ENCODE measurements at regions of chr15 and their contacts with region 1.

Region 1: GRCh38 chr15:74322181-74323076 is 45.0 kb downstream of the CYP11A1 start:
- DNase-seq: peak in 1 of 2 experiments; percentile 88
- H3K4me3 ChIP-seq: no peak overlapping the region
- H3K27ac ChIP-seq: no peak overlapping the region
- H3K4me1 ChIP-seq: peaks cover 3 to 25% (median 19%) of the 10 kb centered on the region in 4 experiments
- H3K27me3 ChIP-seq: no peaks in the 10 kb centered on the region
- CTCF ChIP-seq: peak; percentile 96 to 99 (median 97)
- EP300 ChIP-seq: no peak
- POLR2A ChIP-seq: no peak
- RAD21 ChIP-seq: peak; percentile 99

Region 2: GRCh38 chr15:73972984-73973682 is 349.3 kb before region 1 on chr15:
- CTCF ChIA-PET with region 1: interaction called, 47 read pairs
- POLR2A ChIA-PET with region 1: no interaction called
- DNase-seq: peak; percentile 54 to 92
- H3K4me3 ChIP-seq: peak overlapping the region in 1 of 4 experiments; percentile 44; a peak in 1 of 8 replicates
- H3K27ac ChIP-seq: no peak overlapping the region
- H3K4me1 ChIP-seq: peaks cover 0 to 8% (median 2%) of the 10 kb centered on the region in 4 experiments; a peak in 4 of 7 replicates
- H3K27me3 ChIP-seq: peaks cover 0 to 4% (median 2%) of the 10 kb centered on the region in 4 experiments; a peak in 3 of 7 replicates
- CTCF ChIP-seq: peak; percentile 82 to 94 (median 91)
- EP300 ChIP-seq: no peak
- POLR2A ChIP-seq: no peak
- RAD21 ChIP-seq: peak; percentile 97 to 99

Region 3: GRCh38 chr15:74053941-74054529 is 268.4 kb before region 1 on chr15:
- CTCF ChIA-PET with region 1: interaction called, 96 read pairs
- POLR2A ChIA-PET with region 1: interaction called, 5 read pairs
- DNase-seq: peak; percentile 21 to 86
- H3K4me3 ChIP-seq: no peak overlapping the region
- H3K27ac ChIP-seq: no peak overlapping the region
- H3K4me1 ChIP-seq: peaks cover 0 to 6% (median 0%) of the 10 kb centered on the region in 4 experiments; a peak in 2 of 7 replicates
- H3K27me3 ChIP-seq: peaks cover 0 to 6% (median 4%) of the 10 kb centered on the region in 4 experiments; a peak in 3 of 7 replicates
- CTCF ChIP-seq: peak; percentile 64 to 85 (median 77)
- EP300 ChIP-seq: no peak
- POLR2A ChIP-seq: no peak
- RAD21 ChIP-seq: peak; percentile 79 to 80

Region 4: DNA sequence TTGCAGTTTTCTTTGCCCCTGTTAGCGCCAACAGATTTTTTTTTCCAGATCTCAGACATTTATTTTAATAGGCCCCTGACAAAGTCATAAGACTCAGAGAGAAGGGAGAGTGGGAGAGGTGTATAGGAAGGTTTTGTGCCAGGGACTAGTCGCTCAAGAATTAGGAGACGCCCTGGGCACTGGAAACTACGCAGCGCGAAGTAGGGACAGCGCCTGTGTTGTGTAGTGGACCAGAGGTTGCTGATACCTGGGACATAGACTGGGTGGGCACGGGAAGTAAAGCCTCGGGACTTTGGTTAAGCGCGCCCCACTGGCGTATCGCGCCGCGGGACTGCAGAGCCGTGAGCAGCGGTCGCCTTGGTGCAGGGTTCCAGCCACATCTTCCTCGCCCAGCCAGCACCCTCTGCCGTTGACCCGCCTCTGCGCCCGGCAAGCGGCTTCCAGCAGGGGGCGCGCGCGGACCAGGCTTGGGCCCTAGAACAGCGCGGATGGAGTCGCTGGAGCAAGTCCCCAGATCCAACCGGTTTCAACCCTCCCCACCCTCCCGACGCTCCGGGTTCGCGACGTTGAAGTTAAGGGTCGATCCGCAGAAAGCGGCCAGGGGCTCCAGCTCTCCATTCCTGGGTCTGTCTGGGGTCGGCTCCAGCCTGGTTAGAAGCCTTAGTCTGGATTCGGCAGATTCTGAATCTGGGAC is 195.0 kb before region 1 on chr15:
- CTCF ChIA-PET with region 1: interaction called, 62 read pairs
- POLR2A ChIA-PET with region 1: interaction called, 4 read pairs
- DNase-seq: peak; percentile 78 to 100
- H3K4me3 ChIP-seq: peak overlapping the region in 3 of 4 experiments; percentile 26 to 57 (median 36); a peak in 7 of 8 replicates
- H3K27ac ChIP-seq: no peak overlapping the region
- H3K4me1 ChIP-seq: peaks cover 2 to 55% (median 42%) of the 10 kb centered on the region in 4 experiments
- H3K27me3 ChIP-seq: peaks cover 49 to 64% (median 57%) of the 10 kb centered on the region in 4 experiments
- CTCF ChIP-seq: peak in 2 of 3 experiments; percentile 99; a peak in 3 of 4 replicates
- EP300 ChIP-seq: no peak
- POLR2A ChIP-seq: no peak
- RAD21 ChIP-seq: peak; percentile 96 to 99

Region 5: DNA sequence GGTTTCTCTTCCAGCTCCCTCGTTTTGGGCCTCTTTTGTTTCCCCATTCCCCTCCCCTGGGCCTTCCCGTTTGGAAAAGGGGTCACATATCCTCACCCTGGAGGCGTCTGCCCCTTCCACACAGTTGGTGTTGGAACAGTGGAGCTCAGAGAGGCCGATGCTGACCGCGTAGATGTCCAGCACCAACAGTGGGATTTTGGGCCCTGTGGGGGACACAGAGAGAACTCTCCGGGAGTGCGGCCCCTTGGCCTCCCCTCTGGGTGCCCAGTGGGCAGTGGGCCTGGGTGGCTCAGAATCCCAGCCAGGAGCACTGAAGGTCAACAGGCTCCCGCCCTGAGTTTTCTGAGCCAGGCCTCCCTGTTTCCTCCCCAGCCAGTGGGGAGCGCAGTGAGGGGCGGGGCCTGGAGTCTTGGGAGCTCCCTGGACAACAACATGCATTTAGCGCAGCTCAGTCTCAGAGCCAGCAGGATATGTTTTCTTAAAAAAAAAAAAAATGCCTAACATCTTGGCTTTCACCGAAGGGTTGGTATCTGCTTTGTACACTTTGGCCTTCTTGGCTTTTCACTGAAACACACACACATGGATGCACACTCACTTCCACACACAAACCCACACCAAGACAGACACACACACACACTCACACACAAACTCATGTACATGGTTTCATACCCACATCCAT is 149.6 kb before region 1 on chr15:
- CTCF ChIA-PET with region 1: interaction called, 13 read pairs
- POLR2A ChIA-PET with region 1: no interaction called
- DNase-seq: no peak
- H3K4me3 ChIP-seq: no peak overlapping the region
- H3K27ac ChIP-seq: no peak overlapping the region
- H3K4me1 ChIP-seq: peaks cover 0 to 20% (median 12%) of the 10 kb centered on the region in 4 experiments; a peak in 5 of 7 replicates
- H3K27me3 ChIP-seq: no peaks in the 10 kb centered on the region; a peak in 3 of 7 replicates
- CTCF ChIP-seq: no peak
- EP300 ChIP-seq: no peak
- POLR2A ChIP-seq: no peak
- RAD21 ChIP-seq: no peak

Region 6: DNA sequence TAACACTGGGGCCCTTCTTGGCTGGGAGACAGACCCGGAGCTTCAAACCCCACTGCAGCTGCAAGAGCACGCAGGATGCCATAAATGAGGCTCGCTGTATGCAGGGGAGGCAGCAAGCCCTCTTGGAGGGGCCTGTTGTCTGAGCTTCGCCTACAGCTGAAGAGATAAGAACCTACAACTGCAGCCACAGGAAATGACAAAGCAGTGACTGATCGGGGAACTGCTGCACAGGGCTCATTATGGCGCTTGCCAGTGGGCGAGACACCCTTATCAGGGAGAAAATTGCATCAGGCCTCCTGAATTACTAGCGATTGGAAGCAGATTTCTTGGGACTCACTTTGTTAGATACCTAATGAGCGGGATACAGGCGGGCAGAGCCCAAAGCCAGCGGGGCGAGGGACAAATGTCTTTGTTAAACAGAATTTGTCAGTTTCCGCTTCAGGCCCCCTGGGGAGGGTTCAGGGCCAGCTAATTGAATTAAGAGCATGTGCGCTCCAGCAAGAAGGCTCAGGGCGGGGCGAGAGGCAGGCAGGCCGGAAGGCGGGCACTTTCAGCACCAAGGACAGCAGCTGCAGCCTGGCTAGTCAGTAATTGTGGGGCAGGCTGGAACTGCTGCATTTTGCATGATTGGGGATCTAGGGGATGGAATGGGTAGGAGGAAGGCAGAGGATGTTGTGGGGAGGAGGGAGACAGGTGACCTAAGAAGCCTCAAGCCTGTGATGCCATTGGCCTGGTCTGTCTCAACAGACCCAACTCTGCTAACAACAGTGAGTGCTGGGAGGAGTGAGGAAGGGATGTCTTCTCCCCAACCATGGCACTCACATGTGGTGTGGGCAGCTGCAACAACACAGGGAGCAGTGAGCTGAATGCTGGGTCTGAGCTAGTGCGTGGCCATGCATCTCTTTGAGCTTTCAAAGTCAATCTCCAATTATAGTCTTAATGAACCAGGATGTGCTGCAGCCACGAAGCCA is 31.0 kb before region 1 on chr15:
- CTCF ChIA-PET with region 1: interaction called, 16 read pairs
- POLR2A ChIA-PET with region 1: no interaction called
- DNase-seq: peak; percentile 93 to 98
- H3K4me3 ChIP-seq: peak overlapping the region in 2 of 4 experiments; percentile 2 to 44; a peak in 3 of 8 replicates
- H3K27ac ChIP-seq: no peak overlapping the region
- H3K4me1 ChIP-seq: peaks cover 3 to 12% (median 4%) of the 10 kb centered on the region in 4 experiments; a peak in 5 of 7 replicates
- H3K27me3 ChIP-seq: peaks cover 0 to 10% (median 6%) of the 10 kb centered on the region in 4 experiments; a peak in 6 of 7 replicates
- CTCF ChIP-seq: no peak
- EP300 ChIP-seq: no peak
- POLR2A ChIP-seq: no peak
- RAD21 ChIP-seq: peak in 1 of 2 experiments; percentile 30; a peak in 3 of 4 replicates

Region 7: DNA sequence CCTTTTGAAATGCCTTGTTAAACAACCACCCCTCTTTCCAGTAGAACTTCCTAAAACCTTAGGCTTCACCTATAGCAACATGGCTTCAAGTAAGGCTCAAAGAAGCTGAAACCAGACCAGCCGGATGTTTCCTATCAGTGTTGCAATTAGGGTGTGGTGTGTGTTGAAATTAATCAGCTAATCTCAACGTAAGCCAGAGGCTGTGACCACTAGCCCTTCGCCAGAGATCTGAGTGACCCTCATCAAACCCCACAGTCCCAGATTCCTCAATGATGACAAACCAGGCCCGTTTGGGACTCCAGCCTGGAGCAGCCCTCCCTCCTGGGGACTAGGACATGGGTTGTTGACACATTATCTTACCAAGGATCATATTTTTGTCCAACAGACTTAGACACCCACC is 17.7 kb after region 1 on chr15:
- CTCF ChIA-PET with region 1: interaction called, 75 read pairs
- POLR2A ChIA-PET with region 1: interaction called, 4 read pairs
- DNase-seq: no peak
- H3K4me3 ChIP-seq: no peak overlapping the region
- H3K27ac ChIP-seq: no peak overlapping the region
- H3K4me1 ChIP-seq: no peaks in the 10 kb centered on the region; a peak in 1 of 7 replicates
- H3K27me3 ChIP-seq: no peaks in the 10 kb centered on the region
- CTCF ChIP-seq: no peak
- EP300 ChIP-seq: no peak
- POLR2A ChIP-seq: no peak
- RAD21 ChIP-seq: no peak